ENCODE measurements at regions of chr12 and their contacts with region 1.

Region 1: DNA sequence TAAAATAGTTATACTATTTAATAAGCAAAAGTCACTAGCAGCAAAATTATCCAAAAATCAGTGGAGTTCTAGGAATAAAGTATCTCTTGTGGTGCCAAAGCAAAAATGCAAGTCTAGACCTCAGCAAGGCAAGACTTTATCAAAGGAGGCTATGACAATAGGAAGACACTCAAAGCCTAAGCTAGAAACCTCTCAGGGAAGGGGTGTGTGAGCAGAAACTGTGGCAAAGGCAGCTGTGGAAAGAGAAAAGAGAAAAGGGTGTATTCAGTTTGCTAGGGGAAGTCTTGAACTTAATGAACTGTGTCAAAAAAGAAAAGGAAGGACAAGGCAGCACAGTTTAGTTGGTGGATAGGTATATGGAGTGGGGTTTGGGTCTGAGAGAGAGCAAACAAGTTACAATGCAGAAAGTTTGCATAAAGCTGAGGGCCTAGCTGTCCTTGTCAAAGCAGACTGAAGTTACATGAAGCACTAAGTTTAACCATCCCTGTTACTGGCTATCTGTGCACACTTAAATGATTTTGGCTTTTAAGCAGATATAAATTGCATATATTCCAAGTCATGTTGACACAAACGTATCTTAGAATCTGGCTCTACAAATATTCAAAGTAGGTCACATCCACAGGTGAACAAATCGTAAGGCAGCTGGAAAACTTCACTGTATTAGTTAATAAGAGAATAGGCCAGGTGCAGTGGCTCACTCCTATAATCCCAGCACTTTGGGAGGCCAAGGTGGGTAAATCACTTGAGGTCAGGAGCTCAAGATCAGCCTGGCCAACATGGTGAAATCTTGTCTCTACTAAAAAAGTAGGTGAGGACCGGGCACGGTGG is 31.0 kb upstream of the AMN1 start:
- DNase-seq: peak; percentile 39
- H3K4me3 ChIP-seq: no peak overlapping the region
- H3K27ac ChIP-seq: peak overlapping the region; percentile 29
- H3K4me1 ChIP-seq: peaks cover 13% of the 10 kb centered on the region
- CTCF ChIP-seq: no peak

Region 2: DNA sequence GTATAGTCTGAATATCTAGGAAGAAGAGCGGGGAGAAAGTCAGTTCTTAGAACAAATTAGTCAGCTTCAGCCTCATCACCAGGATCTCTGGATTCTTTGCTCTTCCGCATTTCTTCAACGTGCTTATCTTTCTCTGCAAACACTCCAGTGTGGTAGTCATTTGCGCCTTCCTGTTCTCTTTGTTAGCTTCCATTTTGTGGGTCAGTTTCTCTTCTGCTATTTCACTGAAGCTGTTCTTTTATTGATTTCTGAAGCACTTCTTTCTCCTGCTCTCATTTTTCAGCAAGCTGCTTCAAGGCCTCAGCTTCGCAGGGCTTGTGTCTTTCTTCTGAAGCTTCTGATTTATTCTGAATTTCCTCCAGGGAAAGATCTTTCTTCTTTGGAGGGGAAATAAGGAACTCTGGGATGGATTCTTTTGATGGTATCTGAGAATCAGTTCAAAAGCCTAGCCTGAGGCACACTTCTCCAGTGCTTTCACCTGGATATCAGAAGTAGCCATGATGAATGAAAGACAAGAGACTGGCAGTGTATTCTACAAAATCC is 44.5 kb before region 1 on chr12:
- CTCF ChIA-PET with region 1: interaction called, 4 read pairs
- POLR2A ChIA-PET with region 1: interaction called, 11 read pairs
- intact Hi-C with region 1: no loop called
- DNase-seq: peak; percentile 88
- H3K4me3 ChIP-seq: peak overlapping the region; percentile 50
- H3K27ac ChIP-seq: peak overlapping the region; percentile 80
- H3K4me1 ChIP-seq: peaks cover 20% of the 10 kb centered on the region
- CTCF ChIP-seq: no peak

Region 3: DNA sequence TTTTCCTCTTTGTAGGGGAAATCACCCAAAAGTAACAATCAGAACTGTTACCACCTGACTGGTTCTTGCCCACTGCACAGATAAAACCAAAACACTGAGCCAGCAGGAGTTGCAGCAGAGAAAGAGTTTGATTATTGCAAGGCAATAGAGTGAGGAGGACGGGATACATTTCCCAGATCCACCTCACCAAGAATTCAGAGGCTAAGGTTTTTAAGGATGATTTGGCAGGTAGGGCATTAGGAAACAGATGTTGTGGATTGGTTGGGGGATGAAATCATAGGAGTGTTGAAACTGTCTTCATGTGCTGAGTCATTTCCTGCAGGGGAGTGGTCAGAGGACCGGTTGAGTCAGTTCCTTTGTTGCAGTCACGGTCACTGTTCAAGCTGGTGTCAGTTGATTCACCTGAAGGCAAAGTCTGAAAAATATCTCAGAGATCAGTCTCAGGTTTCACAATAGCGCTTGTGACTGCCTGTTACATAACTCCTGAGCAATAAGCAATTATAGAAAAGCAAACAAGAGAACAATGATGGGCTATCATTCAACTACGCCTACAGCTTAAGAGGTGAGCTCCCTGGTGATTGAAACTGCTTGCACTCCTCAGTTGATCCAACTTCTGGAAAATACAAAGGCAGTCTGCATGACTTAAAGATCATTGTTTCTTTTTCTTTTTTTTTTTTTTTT is 10.7 kb before region 1 on chr12:
- CTCF ChIA-PET with region 1: interaction called, 4 read pairs
- POLR2A ChIA-PET with region 1: interaction called, 8 read pairs
- intact Hi-C with region 1: loop called (anchors 1 kb)
- DNase-seq: peak; percentile 79
- H3K4me3 ChIP-seq: peak overlapping the region; percentile 2
- H3K27ac ChIP-seq: peak overlapping the region; percentile 74
- H3K4me1 ChIP-seq: peaks cover 83% of the 10 kb centered on the region
- CTCF ChIP-seq: no peak

Region 4: DNA sequence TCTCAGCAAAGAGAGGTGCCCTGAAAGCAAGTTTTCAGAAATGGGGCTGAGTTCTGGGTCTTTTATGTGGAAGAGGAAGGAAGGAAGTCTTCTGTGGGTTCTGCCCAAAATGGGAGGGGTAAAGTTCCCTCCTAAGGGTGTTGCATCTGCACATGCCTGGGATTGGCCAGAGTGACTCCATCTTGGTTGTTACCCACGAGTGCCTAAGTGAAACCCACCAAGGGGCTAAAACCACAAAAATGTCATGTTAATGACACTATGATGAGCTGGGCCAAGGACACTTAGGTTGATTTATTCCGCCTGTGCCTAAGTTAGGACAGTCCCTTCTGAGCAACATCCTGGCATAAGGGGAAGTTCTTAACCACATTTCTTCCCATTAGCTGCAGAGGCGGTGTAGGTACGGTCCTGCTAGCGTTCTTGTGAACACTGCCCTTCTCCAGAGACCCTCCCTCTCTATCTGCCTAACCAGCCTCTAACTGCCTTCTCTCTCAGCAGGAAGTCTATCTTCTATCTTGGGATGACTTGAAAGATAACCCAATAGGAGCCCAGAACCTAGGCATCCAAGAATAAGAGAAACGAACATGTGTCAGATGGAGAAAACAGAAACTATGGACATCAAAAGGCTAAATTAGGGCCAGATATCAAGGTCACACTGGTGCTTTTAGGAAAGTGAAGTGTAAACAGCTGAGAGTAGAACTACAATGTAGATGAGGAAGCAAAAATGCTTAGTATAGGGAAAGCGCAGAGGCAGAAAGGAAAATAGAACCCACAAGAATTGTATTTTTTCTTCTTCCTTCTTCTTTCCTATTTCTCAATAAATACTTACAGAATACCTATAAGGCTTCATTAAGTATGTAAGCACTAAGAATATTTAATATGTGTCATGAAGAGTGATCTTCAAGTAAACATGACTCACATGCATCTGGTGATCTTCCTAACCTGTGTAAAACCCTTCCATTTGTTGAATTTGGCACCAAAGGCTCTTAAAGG is 73.2 kb after region 1 on chr12:
- CTCF ChIA-PET with region 1: no interaction called
- POLR2A ChIA-PET with region 1: no interaction called
- intact Hi-C with region 1: no loop called
- DNase-seq: peak; percentile 52
- H3K4me3 ChIP-seq: no peak overlapping the region
- H3K27ac ChIP-seq: peak overlapping the region; percentile 9
- H3K4me1 ChIP-seq: peaks cover 22% of the 10 kb centered on the region
- CTCF ChIP-seq: no peak

Measured in OCI-LY7 (cell line).